Calu3 (cell line): ENCODE measurements at regions of chr14 and their contacts with region 1.

Region 1: GRCh38 chr14:102591889-102592763 is at the start of gene RCOR1:
- DNase-seq: peak; percentile 98
- H3K4me3 Mint-ChIP-seq: peak within 1 kb of the TSS; percentile 85
- H3K27ac Mint-ChIP-seq: peak within 1 kb of the TSS; percentile 86
- H3K4me1 Mint-ChIP-seq: peaks cover 30% of the 10 kb centered on the region
- H3K27me3 Mint-ChIP-seq: no peaks in the 10 kb centered on the region
- CTCF ChIP-seq: no peak
- total RNA-seq, gene RCOR1: 27.2 and 28.6 TPM in 2 replicates

Region 2: DNA sequence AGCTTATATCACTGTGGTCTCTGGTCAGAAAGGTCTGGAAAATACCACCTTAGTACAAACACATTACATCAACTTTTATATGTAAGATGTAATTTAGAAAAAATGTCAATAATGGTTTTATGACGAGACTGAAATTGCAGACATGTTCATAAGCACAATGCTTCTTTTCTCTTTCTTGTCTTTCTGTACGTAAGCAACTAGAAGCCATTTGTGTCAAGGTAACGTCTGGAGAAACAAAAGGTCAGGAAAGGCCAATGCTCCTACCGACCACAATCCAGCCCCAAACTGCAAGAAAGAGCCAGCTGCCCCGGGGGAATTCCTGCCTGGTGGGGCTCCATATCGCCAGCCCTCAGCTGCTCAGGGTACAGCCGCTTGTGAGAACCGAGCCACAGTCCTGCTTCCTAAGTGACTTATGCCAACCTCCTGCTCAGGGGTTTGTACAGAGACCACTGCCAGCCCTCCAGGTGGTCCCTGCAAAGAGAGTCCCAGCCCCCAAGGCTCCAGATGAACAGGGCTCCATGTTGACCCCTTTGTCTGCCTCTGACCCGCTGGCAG is 266.3 kb before region 1 on chr14:
- CTCF ChIA-PET with region 1: no interaction called
- intact Hi-C with region 1: no loop called
- DNase-seq: no peak
- H3K4me3 Mint-ChIP-seq: no peak overlapping the region
- H3K27ac Mint-ChIP-seq: no peak overlapping the region
- H3K4me1 Mint-ChIP-seq: no peaks in the 10 kb centered on the region
- H3K27me3 Mint-ChIP-seq: no peaks in the 10 kb centered on the region
- CTCF ChIP-seq: no peak

Region 3: DNA sequence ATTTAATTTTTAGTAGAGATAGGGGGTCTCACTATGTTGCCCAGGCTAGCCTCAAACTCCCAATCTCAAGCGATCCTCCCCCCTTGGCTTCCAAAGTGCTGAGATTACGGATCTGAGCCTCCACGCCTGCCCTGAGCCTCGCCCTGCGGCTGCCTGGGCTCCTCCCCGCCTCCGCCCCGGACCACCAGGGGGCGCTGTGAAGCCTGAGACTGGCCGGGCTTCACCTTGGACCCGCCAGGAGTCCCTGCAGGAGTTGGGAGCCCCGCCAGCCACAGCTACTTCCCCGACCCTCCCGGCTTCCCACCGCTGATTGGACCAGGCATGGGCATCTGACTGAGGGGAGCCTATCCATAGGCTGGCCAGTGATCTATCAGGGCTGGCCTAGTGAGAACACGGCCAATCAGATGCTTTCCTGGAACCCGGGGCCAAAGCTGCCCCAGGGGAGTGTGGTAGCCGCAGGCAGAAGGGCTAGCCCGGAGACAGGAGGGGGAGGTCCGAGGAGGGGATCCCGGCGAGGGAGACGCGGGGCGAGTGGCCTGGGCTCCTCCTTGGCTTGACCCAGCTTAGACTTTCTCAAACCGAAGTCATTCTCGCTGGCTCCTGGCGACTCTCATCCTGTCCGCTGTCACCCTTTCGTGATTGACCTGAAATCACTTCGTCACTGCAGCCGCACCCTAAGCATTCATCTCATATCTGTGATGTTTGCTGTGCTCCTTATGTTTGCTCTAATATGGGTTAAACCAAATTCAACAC is 67.5 kb before region 1 on chr14:
- CTCF ChIA-PET with region 1: interaction called, 11 read pairs
- intact Hi-C with region 1: loop called (anchors 2 kb)
- DNase-seq: peak; percentile 99
- H3K4me3 Mint-ChIP-seq: peak overlapping the region; percentile 97
- H3K27ac Mint-ChIP-seq: peak overlapping the region; percentile 91
- H3K4me1 Mint-ChIP-seq: peaks cover 26% of the 10 kb centered on the region
- H3K27me3 Mint-ChIP-seq: no peaks in the 10 kb centered on the region
- CTCF ChIP-seq: peak; percentile 90